ENCODE measurements at regions of chr10 and their contacts with region 1.

Region 1: DNA sequence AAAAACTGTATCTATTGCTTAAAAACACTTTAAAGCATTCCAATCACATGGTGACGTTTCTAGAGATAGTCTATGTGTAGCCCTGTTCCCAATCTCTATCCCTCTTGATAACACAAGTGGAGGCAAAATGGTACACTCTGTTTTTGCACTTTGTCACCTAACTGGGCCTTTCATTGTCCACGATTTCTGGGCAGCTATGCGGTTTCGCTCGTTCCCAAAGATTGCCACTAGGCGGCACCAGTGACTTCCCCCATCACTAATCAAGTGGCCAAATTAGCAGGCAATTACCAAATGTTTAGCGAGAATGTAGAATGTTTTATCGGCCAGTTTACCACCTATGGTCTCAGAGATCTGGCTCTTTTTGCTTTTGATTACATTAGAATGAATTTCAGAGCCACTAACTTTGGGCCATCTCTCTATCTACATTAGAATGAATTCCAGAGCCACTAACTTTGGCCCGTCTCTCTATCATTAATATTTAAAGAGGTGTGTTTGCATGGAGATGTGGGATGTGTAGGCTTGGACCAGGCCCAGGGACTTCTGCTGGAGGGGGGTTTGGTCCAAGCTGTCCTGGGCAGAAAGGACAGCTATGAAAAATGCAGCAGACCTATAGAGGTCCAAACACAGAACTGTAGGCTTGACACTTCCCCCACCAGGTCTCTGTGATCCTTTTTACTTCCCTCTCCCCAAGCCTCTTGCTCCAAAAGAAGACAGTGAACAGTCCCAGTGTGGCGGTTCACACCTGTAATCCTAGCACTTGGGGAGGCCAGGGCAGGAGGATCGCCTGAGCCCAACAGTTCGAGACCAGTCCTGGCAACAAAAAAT is 90.1 kb downstream of the EPC1 start:
- DNase-seq: no peak
- ATAC-seq: peak; percentile 62

Region 2: GRCh38 chr10:32346134-32346550 is 89.3 kb after region 1 on chr10:
- intact Hi-C with region 1: loop called (anchors 1 kb)
- DNase-seq: peak; percentile 98
- ATAC-seq: peak; percentile 98

Region 3: DNA sequence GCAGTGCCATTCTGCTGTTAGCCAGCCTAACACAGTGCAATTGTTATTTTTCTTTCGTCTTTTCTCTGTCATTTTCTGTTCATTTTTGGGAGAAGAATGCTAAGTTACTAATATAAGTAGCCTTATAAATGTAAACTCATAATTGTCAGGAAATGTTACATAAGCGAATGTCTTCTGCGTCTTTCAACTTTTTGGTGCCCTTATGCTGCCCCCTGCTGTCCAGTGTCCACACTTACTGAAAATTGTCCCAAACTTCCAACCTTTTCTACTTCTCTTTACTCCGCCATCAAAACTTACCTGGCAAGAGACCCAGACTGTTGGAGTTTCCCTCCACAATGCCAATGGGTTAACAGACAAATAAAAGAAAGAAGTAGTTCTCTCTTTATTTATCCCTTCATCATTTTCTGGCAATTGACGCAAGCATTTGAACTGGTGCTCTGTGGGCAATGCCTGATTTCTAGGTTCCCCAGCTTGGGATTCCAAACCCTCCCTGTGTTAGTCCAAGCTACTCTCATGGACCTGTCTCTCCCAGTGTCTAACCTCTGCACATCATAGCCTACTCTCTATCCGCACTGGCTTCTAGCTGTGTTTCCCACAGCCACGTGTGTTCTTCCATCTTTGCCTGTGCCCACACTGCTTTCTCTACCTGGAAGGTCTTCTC is 111.1 kb after region 1 on chr10:
- intact Hi-C with region 1: loop called (anchors 2 kb)
- DNase-seq: no peak
- ATAC-seq: peak; percentile 38

Region 4: DNA sequence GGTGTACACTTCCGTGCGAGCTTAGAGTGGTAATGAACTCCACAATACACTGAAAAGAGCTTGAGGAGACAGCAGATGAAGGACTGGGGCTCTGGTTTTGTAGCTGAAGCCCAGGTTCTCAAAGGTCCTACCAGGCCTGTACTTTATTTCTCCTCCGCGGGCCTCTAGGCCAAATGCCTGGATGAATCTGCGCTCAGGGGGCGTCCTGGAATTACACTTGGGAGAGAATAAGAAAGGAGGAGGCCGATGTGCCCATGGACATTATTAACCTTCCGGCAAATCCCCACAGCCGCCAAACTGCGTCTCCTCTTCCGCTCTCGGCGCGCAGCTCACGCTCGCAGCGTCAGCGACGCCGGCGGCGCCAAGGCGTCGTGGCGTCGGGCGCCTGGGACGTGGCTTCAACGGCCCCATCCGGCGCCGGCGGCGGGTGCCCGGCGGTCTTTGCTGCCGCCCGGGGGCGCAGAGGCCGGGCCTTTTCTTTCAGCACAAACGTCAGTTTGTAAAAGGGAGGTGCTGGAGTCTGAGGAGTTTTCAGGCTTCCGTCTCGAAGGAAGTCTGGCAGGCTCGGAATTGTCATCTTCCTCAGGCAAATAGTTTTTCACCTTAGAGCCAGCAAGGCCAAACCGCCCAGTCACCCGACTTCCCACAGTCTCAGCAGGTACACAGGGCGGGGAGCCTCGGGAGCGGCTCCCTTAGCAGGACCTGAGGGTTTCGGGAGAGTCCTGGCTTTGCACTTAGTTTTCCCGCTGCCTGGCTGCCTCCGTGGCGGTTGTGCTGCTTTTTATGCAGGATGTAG is 189.1 kb after region 1 on chr10 and contains the start of gene CCDC7:
- intact Hi-C with region 1: loop called (anchors 10 kb)
- DNase-seq: peak; percentile 93
- ATAC-seq: peak; percentile 99
- total RNA-seq, gene CCDC7: 22.2 TPM

Measured in Right ventricle myocardium inferior (tissue), 1 donor.